IMR-90 (cell line): ENCODE measurements at regions of chr14 and their contacts with region 1.

Region 1: GRCh38 chr14:36320200-36320896 is at the start of gene MBIP:
- DNase-seq: peak; percentile 97
- ATAC-seq: peak; percentile 99
- H3K4me3 ChIP-seq: peak within 1 kb of the TSS; percentile 77
- H3K27ac ChIP-seq: peak within 1 kb of the TSS; percentile 84
- H3K4me1 ChIP-seq: no peaks in the 10 kb centered on the region
- H3K27me3 ChIP-seq: no peaks in the 10 kb centered on the region
- CTCF ChIP-seq: no peak
- POLR2A ChIP-seq: peak; percentile 56; the same call in 1 of the 2 replicates
- RAD21 ChIP-seq: no peak
- total RNA-seq, gene MBIP: 9.3 and 15.0 TPM in 2 replicates

Region 2: DNA sequence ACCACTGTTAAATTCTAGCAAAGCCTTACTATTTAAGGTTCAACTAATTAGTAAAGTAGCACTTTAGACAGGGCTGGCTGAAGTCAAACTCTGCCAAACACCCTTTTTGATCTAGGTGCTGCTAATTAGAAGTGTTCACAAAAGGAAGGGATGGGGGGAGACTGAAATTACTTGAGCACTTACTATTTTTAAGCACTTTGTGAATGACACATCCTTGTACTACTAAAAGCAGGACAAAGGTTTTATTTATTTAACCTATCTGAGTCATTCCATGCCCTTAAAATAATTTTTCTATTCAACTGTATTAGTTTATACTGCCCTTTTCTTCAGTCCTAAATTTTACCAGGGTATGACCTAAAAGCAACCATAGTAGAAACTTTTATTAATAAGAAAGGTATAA is 20.0 kb before region 1 on chr14:
- CTCF ChIA-PET with region 1: no interaction called
- POLR2A ChIA-PET with region 1: no interaction called
- dilution Hi-C with region 1: no loop called
- in situ Hi-C with region 1: no loop called
- intact Hi-C with region 1: loop called (anchors 2 kb)
- DNase-seq: peak; percentile 34
- ATAC-seq: peak; percentile 24; the same call in 1 of the 2 replicates
- H3K4me3 ChIP-seq: no peak overlapping the region
- H3K27ac ChIP-seq: no peak overlapping the region
- H3K4me1 ChIP-seq: peaks cover 2% of the 10 kb centered on the region; the same call in 1 of the 2 replicates
- H3K27me3 ChIP-seq: no peaks in the 10 kb centered on the region
- CTCF ChIP-seq: no peak
- POLR2A ChIP-seq: no peak
- RAD21 ChIP-seq: no peak

Region 3: DNA sequence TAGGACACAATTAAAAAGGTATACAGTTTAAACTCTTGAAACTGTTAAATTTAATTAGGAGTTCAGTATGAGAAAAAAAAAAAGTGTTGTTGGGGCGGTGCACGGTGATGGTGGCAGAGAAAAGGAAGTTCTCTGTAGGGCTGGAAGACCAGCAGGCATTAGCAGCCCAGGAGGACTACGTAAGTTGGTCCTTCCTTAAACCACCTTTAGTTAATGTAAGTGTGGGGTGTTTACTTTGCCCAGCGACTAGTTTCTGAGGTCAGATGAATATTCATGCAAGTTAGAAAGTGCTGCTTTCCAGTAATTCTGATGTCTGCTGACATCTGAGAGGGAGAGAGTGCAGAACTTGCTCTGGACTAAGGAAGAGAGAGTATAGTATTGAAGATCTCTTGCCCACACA is 144.8 kb after region 1 on chr14:
- CTCF ChIA-PET with region 1: no interaction called
- POLR2A ChIA-PET with region 1: no interaction called
- dilution Hi-C with region 1: no loop called
- in situ Hi-C with region 1: no loop called
- intact Hi-C with region 1: no loop called
- DNase-seq: no peak
- ATAC-seq: no peak
- H3K4me3 ChIP-seq: no peak overlapping the region
- H3K27ac ChIP-seq: no peak overlapping the region
- H3K4me1 ChIP-seq: no peaks in the 10 kb centered on the region
- H3K27me3 ChIP-seq: no peaks in the 10 kb centered on the region
- CTCF ChIP-seq: no peak
- POLR2A ChIP-seq: no peak
- RAD21 ChIP-seq: no peak